ENCODE measurements at regions of chr19 and their contacts with region 1.

Region 1: DNA sequence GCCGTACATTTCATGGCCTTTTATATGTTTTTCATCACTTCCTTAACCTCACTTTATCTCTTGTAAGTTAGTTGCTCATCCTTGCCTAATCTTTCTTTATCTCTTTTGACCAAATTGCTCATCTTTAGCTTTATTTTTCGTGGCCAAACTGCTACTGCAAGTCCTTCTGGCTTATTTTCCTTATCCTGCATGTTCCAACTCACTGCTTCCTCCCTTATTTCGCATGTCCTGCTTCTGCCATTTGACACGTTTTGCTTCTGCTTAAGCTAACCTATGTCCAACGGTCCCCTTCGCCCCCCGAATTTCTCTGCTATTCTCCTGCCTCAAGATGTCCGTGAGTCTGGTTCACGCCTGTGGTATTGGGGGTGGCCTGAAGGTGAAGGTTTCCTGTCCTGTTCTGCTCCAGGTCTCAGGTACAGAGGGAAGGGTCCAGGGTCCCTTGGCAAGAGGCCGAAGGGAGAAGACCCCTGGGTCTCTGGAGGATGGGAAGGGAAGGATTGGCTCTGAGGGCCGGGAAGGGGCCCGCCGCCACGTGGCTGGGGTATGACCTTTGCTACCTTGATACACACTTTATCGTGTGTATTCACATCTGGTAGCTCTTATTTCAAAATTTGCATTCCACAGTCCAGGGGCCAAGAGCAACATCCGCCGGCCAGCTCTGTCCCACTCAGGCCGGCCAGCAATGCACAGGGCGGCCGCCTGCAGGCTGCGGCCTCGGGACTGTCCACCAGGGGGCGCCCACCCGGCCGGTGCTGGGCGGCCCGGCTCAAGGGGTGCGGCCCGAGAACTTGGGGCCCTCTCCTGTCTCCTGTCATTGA is 2.9 kb upstream of the C19orf85 start:
- DNase-seq: peak; percentile 77
- ATAC-seq: peak; percentile 78
- H3K4me3 Mint-ChIP-seq: no peak overlapping the region
- H3K27ac Mint-ChIP-seq: no peak overlapping the region
- H3K4me1 Mint-ChIP-seq: peaks cover 27% of the 10 kb centered on the region
- H3K27me3 Mint-ChIP-seq: peaks cover 33% of the 10 kb centered on the region
- CTCF ChIP-seq: peak; percentile 98

Region 2: GRCh38 chr19:55452749-55453346 is 14.6 kb before region 1 on chr19:
- CTCF ChIA-PET with region 1: interaction called, 18 read pairs
- POLR2A ChIA-PET with region 1: no interaction called
- DNase-seq: peak; percentile 95
- ATAC-seq: peak; percentile 84
- H3K4me3 Mint-ChIP-seq: peak overlapping the region; percentile 74
- H3K27ac Mint-ChIP-seq: no peak overlapping the region
- H3K4me1 Mint-ChIP-seq: peaks cover 8% of the 10 kb centered on the region
- H3K27me3 Mint-ChIP-seq: peaks cover 32% of the 10 kb centered on the region
- CTCF ChIP-seq: no peak; the same call in 1 of the 2 replicates

Region 3: DNA sequence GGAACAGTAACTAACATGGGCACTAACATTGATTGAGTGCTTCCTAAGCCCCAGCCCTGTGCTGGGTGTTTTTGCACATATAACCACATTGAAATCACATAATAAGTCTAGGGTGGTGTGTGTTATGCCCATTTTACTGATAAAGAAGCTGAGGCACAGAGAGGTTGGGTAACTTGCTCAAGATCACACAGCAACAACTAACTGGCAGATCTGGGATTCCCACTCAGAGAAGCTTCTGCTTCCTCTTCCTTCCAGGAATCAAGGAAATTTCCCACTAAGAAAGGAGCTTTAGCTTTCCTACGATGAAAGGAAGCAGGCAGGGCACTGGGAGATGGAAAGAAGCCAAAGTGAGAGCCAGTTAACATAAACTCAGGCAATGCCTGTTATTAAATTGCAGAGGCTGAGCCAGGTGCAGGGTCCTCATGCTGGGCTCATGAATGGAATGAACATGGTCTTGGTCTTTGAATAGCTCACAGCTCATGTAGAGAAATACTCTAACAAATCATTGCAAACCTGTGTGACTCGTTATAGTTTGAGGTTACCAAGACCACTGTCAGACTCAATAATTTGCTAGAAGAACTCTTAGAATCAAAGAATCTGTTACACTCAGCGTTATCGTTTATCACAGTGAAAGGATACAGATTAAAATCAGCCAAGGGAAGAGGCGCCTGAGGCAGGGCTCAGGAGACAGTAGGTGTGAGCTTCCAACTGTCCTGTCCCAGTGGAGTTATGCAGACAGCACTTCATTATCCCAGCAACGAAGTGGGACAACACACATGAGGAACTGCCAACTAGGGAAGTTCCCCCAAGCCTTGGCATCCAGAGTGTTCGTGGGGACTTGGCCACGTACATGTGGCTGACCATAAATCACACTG is 31.0 kb after region 1 on chr19:
- CTCF ChIA-PET with region 1: interaction called, 63 read pairs
- POLR2A ChIA-PET with region 1: no interaction called
- DNase-seq: no peak
- ATAC-seq: no peak
- H3K4me3 Mint-ChIP-seq: no peak overlapping the region
- H3K27ac Mint-ChIP-seq: no peak overlapping the region
- H3K4me1 Mint-ChIP-seq: no peaks in the 10 kb centered on the region; the same call in 1 of the 2 replicates
- H3K27me3 Mint-ChIP-seq: peaks cover 61% of the 10 kb centered on the region
- CTCF ChIP-seq: no peak

Region 4: DNA sequence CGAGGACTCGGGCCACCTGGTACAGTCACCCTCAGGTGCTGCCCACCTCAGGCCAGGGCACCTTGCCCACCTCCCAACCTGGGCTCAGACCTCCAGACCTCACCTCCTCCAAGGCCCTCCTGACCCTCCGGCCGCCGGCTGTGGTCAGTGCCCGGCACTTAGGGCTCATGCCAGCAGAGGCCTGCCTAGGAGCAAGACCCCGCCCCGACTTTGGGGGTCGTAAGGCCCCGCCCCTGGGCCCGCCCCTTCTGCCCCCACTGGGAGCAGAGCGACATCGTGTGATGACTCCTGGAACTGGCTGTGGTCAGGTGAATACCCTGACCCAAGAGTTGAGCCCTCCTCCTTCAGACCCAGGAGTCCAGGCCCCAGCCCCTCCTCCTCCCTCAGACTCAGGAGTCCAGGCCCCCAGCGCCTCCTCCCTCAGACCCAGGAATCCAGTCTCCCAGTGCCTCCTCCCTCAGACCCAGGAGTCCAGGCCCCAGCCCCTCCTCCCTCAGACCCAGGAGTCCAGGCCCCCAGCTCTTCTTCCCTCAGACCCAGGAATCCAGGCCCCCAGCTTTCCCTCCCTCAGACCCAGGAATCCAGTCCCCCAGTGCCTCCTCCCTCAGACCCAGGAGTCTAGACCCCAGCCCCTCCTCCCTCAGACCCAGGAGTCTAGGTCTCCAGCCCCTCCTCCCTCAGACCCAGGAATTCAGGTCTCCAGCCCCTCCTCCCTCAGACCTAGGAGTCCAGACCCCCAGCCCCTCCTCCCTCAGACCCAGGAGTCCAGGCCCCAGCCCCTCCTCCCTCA is 69.7 kb after region 1 on chr19 and contains the start of gene SBK2:
- CTCF ChIA-PET with region 1: interaction called, 11 read pairs
- POLR2A ChIA-PET with region 1: no interaction called
- DNase-seq: peak; percentile 96
- ATAC-seq: peak; percentile 97
- H3K4me3 Mint-ChIP-seq: peak within 1 kb of the TSS; percentile 37
- H3K27ac Mint-ChIP-seq: no peak within 1 kb of the TSS
- H3K4me1 Mint-ChIP-seq: peaks cover 11% of the 10 kb centered on the region
- H3K27me3 Mint-ChIP-seq: peaks cover 7% of the 10 kb centered on the region
- CTCF ChIP-seq: 0 out of 2 replicates have a peak, but pooled peaks have one; percentile 25
- total RNA-seq, gene SBK2: 5.2 to 6.4 TPM (median 5.8 TPM) in 3 replicates

Region 5: GRCh38 chr19:55605207-55605636 is 137.8 kb after region 1 on chr19:
- CTCF ChIA-PET with region 1: interaction called, 24 read pairs
- POLR2A ChIA-PET with region 1: no interaction called
- DNase-seq: peak; percentile 98
- ATAC-seq: peak; percentile 58
- H3K4me3 Mint-ChIP-seq: peak overlapping the region; percentile 83
- H3K27ac Mint-ChIP-seq: peak overlapping the region; percentile 99
- H3K4me1 Mint-ChIP-seq: peaks cover 27% of the 10 kb centered on the region
- H3K27me3 Mint-ChIP-seq: no peaks in the 10 kb centered on the region
- CTCF ChIP-seq: no peak

Region 6: DNA sequence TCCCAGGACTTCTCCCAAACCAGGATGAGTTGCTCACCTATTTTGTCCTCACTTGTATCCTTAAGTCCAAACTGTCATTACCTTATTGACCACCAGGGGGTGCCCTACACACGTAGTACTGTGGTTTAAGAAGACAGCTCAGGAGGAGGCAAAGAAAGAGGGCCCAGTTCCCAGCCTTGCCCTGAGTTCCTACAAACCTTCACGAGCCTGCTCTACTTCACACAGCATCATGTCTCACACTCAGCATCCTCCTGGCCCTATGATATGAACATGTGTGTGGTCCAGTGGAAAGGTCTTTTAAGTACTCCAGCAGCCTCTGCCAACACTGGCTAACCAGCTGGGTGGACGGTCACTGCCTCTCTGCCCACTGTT is 165.0 kb after region 1 on chr19:
- CTCF ChIA-PET with region 1: interaction called, 25 read pairs
- POLR2A ChIA-PET with region 1: no interaction called
- DNase-seq: peak; percentile 92
- ATAC-seq: peak; percentile 61
- H3K4me3 Mint-ChIP-seq: peak overlapping the region; percentile 20; the same call in 1 of the 2 replicates
- H3K27ac Mint-ChIP-seq: peak overlapping the region; percentile 80
- H3K4me1 Mint-ChIP-seq: peaks cover 29% of the 10 kb centered on the region
- H3K27me3 Mint-ChIP-seq: peaks cover 9% of the 10 kb centered on the region; the same call in 1 of the 2 replicates
- CTCF ChIP-seq: peak; percentile 87